CD8-positive, alpha-beta T cell (primary cell): ENCODE measurements at regions of chr21 and their contacts with region 1.

Region 1: GRCh38 chr21:42652527-42653230 is 742 bp upstream of the PDE9A start:
- DNase-seq: no peak
- ATAC-seq: no peak
- H3K4me3 ChIP-seq: peak overlapping the region in 1 of 2 experiments; percentile 7
- H3K4me3 Mint-ChIP-seq: peak overlapping the region; percentile 83
- H3K27ac ChIP-seq: no peak overlapping the region
- H3K27ac Mint-ChIP-seq: peak overlapping the region; percentile 64
- H3K4me1 ChIP-seq: peaks cover 24% of the 10 kb centered on the region
- H3K4me1 Mint-ChIP-seq: peaks cover 26% of the 10 kb centered on the region
- H3K27me3 ChIP-seq: peaks cover 0 to 5% of the 10 kb centered on the region in 2 experiments
- H3K27me3 Mint-ChIP-seq: no peaks in the 10 kb centered on the region
- CTCF ChIP-seq: no peak

Region 2: GRCh38 chr21:42593007-42593806 is 59.5 kb before region 1 on chr21:
- CTCF ChIA-PET with region 1: interaction called, 12 read pairs
- POLR2A ChIA-PET with region 1: interaction called, 5 read pairs
- intact Hi-C with region 1: no loop called
- DNase-seq: peak; percentile 41 to 85 (median 67)
- ATAC-seq: peak; percentile 84
- H3K4me3 ChIP-seq: no peak overlapping the region
- H3K4me3 Mint-ChIP-seq: no peak overlapping the region
- H3K27ac ChIP-seq: no peak overlapping the region
- H3K27ac Mint-ChIP-seq: no peak overlapping the region
- H3K4me1 ChIP-seq: peaks cover 14% of the 10 kb centered on the region
- H3K4me1 Mint-ChIP-seq: peaks cover 14% of the 10 kb centered on the region
- H3K27me3 ChIP-seq: peaks cover 0 to 3% of the 10 kb centered on the region in 2 experiments
- H3K27me3 Mint-ChIP-seq: no peaks in the 10 kb centered on the region
- CTCF ChIP-seq: peak; percentile 88

Region 3: GRCh38 chr21:42684109-42684916 is 31.6 kb after region 1 on chr21:
- CTCF ChIA-PET with region 1: no interaction called
- POLR2A ChIA-PET with region 1: interaction called, 9 read pairs
- intact Hi-C with region 1: loop called in 1 of 2 experiments (anchors 2 kb)
- DNase-seq: peak in 8 of 9 experiments; percentile 20 to 77 (median 58)
- ATAC-seq: peak; percentile 67
- H3K4me3 ChIP-seq: peak overlapping the region in 1 of 2 experiments; percentile 22
- H3K4me3 Mint-ChIP-seq: peak overlapping the region; percentile 74
- H3K27ac ChIP-seq: peak overlapping the region in 1 of 2 experiments; percentile 12
- H3K27ac Mint-ChIP-seq: peak overlapping the region; percentile 87
- H3K4me1 ChIP-seq: peaks cover 45% of the 10 kb centered on the region
- H3K4me1 Mint-ChIP-seq: peaks cover 49% of the 10 kb centered on the region
- H3K27me3 ChIP-seq: no peaks in the 10 kb centered on the region
- H3K27me3 Mint-ChIP-seq: no peaks in the 10 kb centered on the region
- CTCF ChIP-seq: no peak

Region 4: GRCh38 chr21:42746593-42747275 is 94.1 kb after region 1 on chr21:
- CTCF ChIA-PET with region 1: interaction called, 4 read pairs
- POLR2A ChIA-PET with region 1: interaction called, 17 read pairs
- intact Hi-C with region 1: no loop called
- DNase-seq: peak; percentile 22 to 82 (median 64)
- ATAC-seq: peak; percentile 79
- H3K4me3 ChIP-seq: peak overlapping the region; percentile 12 to 27
- H3K4me3 Mint-ChIP-seq: peak overlapping the region; percentile 75
- H3K27ac ChIP-seq: peak overlapping the region; percentile 63 to 76
- H3K27ac Mint-ChIP-seq: peak overlapping the region; percentile 97
- H3K4me1 ChIP-seq: peaks cover 29% of the 10 kb centered on the region
- H3K4me1 Mint-ChIP-seq: peaks cover 33% of the 10 kb centered on the region
- H3K27me3 ChIP-seq: no peaks in the 10 kb centered on the region
- H3K27me3 Mint-ChIP-seq: no peaks in the 10 kb centered on the region
- CTCF ChIP-seq: no peak

Region 5: GRCh38 chr21:42833439-42833815 is 180.7 kb after region 1 on chr21:
- CTCF ChIA-PET with region 1: interaction called, 3 read pairs
- POLR2A ChIA-PET with region 1: interaction called, 3 read pairs
- intact Hi-C with region 1: loop called in 1 of 2 experiments (anchors 1 kb)
- DNase-seq: peak in 7 of 9 experiments; percentile 31 to 70 (median 59)
- ATAC-seq: peak; percentile 75
- H3K4me3 ChIP-seq: peak overlapping the region in 1 of 2 experiments; percentile 22
- H3K4me3 Mint-ChIP-seq: peak overlapping the region; percentile 68
- H3K27ac ChIP-seq: no peak overlapping the region
- H3K27ac Mint-ChIP-seq: no peak overlapping the region
- H3K4me1 ChIP-seq: peaks cover 29% of the 10 kb centered on the region
- H3K4me1 Mint-ChIP-seq: peaks cover 34% of the 10 kb centered on the region
- H3K27me3 ChIP-seq: peaks cover 0 to 4% of the 10 kb centered on the region in 2 experiments
- H3K27me3 Mint-ChIP-seq: no peaks in the 10 kb centered on the region
- CTCF ChIP-seq: peak; percentile 38

Region 6: GRCh38 chr21:42939582-42940410 is 287.1 kb after region 1 on chr21:
- CTCF ChIA-PET with region 1: no interaction called
- POLR2A ChIA-PET with region 1: no interaction called
- intact Hi-C with region 1: no loop called
- DNase-seq: no peak
- ATAC-seq: no peak
- H3K4me3 ChIP-seq: no peak overlapping the region
- H3K4me3 Mint-ChIP-seq: no peak overlapping the region
- H3K27ac ChIP-seq: no peak overlapping the region
- H3K27ac Mint-ChIP-seq: no peak overlapping the region
- H3K4me1 ChIP-seq: no peaks in the 10 kb centered on the region
- H3K4me1 Mint-ChIP-seq: no peaks in the 10 kb centered on the region
- H3K27me3 ChIP-seq: no peaks in the 10 kb centered on the region
- H3K27me3 Mint-ChIP-seq: no peaks in the 10 kb centered on the region
- CTCF ChIP-seq: no peak